ENCODE measurements at regions of chr5 and their contacts with region 1.

Region 1: DNA sequence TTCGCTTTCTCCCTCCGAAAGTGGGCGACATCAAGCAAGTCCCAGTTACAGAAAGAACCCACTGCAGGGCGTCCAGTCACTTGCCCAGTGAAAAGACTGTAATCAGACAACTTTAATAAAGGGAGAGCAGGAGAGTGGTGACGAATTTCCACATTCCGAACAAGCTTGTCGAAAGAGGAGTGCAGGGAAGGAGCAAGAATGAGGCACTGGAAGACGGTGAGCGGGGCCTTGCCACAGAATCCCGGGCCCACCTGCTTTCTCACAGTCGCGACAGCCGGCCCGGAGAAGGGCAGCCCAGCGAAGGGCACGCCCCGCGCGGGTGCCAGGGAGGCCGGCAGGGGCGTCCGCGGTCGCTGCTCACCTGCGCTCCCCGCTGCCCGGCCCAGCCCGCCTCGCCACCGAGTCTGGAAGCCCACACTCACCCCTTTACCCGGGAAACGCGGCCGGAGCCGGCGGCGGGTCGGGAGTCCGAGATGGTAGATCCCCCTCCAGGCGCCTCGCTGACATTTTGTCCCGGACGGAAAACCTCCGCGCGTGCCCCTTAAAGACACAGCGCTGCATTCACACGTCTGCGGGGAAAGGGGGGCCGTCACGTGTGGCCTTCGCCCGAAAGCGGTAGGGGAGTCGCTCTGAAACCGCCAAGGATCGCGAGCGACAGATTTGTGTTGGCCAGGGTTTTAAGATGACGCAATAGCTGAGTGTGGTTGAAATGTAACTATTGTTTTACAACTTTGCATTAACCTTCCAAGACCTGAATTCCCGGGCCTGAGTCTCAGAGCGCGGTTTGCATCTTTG is at the start of gene ZBED3:
- DNase-seq: peak; percentile 87
- ATAC-seq: peak; percentile 89
- H3K4me3 ChIP-seq: peak within 1 kb of the TSS; percentile 76 to 86 (median 82)
- H3K27ac ChIP-seq: peak within 1 kb of the TSS; percentile 91
- H3K4me1 ChIP-seq: peaks cover 29% of the 10 kb centered on the region
- H3K27me3 ChIP-seq: no peaks in the 10 kb centered on the region; a peak in 1 of 5 replicates
- CTCF ChIP-seq: peak; percentile 56
- EP300 ChIP-seq: peak in 1 of 2 experiments; percentile 31; a peak in 1 of 4 replicates
- POLR2A ChIP-seq: peak; percentile 30 to 83; a peak in 3 of 4 replicates
- RAD21 ChIP-seq: no peak
- total RNA-seq, gene ZBED3: 2.3 and 3.1 TPM in 2 replicates

Region 2: DNA sequence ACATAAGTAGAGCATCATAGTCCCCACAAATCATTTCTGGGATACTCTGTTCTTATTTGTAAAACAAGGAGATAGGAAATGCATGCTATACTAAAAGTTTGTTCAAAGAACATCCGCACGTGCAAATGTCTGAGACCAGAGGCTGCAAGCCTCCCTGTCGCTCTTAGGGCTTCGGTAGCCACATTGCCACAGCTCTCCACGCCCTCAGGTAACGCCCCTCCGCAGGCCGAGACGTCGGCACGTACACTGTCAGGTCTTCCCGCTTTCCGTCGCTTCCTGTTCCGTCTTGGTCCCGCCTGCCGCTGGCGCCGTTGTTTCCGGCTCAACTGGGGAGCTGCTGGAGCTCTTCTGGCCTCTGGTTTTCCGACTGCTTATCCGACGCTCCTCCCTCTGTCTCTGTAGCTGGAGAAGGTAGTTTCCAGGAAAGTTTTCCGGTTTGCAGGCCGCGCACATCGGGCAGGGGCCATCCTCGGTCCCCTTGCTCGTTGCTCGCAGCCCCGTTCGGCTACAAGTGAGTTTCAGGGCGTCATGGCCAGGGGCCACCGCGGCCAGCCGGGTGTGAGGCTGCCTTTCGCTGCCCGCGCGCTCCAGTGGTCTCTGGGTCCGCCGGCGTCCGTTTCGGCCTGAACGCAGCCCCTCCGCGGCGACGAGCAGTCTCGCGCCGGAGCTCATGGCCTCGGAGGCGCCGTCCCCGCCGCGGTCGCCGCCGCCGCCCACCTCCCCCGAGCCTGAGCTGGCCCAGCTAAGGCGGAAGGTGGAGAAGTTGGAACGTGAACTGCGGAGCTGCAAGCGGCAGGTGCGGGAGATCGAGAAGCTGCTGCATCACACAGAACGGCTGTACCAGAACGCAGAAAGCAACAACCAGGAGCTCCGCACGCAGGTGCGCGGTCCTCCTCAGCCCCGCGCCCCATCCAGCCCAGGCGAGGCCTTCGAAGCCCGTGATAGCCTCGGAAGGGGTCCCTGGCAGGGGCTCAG is 56.5 kb before region 1 on chr5 and contains the start of gene AGGF1:
- CTCF ChIA-PET with region 1: no interaction called
- POLR2A ChIA-PET with region 1: interaction called, 19 read pairs
- in situ Hi-C with region 1: no loop called
- intact Hi-C with region 1: no loop called
- DNase-seq: peak; percentile 90
- ATAC-seq: peak; percentile 99
- H3K4me3 ChIP-seq: peak within 1 kb of the TSS; percentile 77 to 97 (median 88)
- H3K27ac ChIP-seq: peak within 1 kb of the TSS; percentile 94
- H3K4me1 ChIP-seq: peaks cover 31% of the 10 kb centered on the region
- H3K27me3 ChIP-seq: no peaks in the 10 kb centered on the region; a peak in 1 of 5 replicates
- CTCF ChIP-seq: peak; percentile 8; the same call in 1 of the 2 replicates
- EP300 ChIP-seq: no peak
- POLR2A ChIP-seq: peak; percentile 86 to 88
- RAD21 ChIP-seq: no peak
- total RNA-seq, gene AGGF1: 15.5 and 20.2 TPM in 2 replicates

Region 3: GRCh38 chr5:77210091-77210963 is 123.4 kb after region 1 on chr5 and contains the start of gene PDE8B:
- CTCF ChIA-PET with region 1: no interaction called
- POLR2A ChIA-PET with region 1: no interaction called
- in situ Hi-C with region 1: no loop called
- intact Hi-C with region 1: no loop called
- DNase-seq: no peak
- ATAC-seq: peak; percentile 70
- H3K4me3 ChIP-seq: peak within 1 kb of the TSS; percentile 18 to 58 (median 33); a peak in 3 of 6 replicates
- H3K27ac ChIP-seq: no peak within 1 kb of the TSS
- H3K4me1 ChIP-seq: peaks cover 6% of the 10 kb centered on the region; the same call in 1 of the 2 replicates
- H3K27me3 ChIP-seq: peaks cover 5 to 54% of the 10 kb centered on the region in 2 experiments
- CTCF ChIP-seq: no peak
- EP300 ChIP-seq: no peak
- POLR2A ChIP-seq: no peak
- RAD21 ChIP-seq: no peak
- total RNA-seq, gene PDE8B: not detected in 2 replicates